A673 (cell line): ENCODE measurements at regions of chr1 and their contacts with region 1.

Region 1: DNA sequence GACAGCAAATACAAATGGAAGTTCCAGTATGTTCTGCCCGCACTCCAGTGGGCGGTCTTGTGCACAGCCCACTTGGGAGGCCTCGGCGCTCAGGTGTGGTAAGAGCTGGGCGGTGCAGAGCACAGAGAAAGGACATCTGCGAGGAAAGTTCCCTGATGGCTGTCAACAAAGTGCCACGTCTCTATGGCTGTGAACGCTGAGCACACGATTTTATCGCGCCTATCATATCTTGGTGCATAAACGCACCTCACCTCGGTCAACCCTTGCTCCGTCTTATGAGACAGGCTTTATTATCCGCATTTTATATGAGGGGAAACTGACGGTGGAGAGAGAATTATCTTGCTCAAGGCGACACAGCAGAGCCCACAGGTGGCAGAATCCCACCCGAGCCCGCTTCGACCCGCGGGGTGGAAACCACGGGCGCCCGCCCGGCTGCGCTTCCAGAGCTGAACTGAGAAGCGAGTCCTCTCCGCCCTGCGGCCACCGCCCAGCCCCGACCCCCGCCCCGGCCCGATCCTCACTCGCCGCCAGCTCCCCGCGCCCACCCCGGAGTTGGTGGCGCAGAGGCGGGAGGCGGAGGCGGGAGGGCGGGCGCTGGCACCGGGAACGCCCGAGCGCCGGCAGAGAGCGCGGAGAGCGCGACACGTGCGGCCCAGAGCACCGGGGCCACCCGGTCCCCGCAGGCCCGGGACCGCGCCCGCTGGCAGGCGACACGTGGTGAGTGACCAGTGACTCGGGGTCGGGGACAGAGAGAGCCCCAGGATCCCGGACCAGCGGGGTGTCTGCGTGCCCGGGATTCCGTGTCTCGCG is at the start of gene IL12RB2:
- DNase-seq: peak; percentile 7
- H3K4me3 ChIP-seq: peak within 1 kb of the TSS; percentile 33
- H3K27ac ChIP-seq: no peak within 1 kb of the TSS
- H3K4me1 ChIP-seq: peaks cover 4% of the 10 kb centered on the region
- H3K27me3 ChIP-seq: peaks cover 3% of the 10 kb centered on the region
- CTCF ChIP-seq: no peak
- total RNA-seq, gene IL12RB2: 0.39 and 0.70 TPM in 2 replicates

Region 2: DNA sequence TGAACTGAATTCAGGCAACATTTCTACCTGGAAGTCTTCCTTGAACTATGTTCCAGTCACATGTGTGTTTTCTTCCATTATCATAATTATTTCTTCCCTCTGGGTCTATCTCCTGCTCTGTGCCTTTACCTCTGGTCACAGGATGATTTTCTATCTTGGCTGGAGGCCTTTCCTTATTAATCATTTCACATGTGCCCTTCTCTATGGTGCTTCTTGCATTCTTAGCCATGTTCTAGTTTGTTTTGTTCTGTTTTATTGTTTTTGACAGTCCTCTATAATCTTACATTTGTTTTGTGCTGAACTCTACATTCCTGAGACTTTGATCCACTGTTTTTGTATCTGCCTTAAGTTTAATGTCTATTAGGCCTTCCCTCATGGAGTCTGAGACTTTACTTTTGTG is 722.5 kb before region 1 on chr1:
- CTCF ChIA-PET with region 1: no interaction called
- POLR2A ChIA-PET with region 1: interaction called, 10 read pairs
- intact Hi-C with region 1: no loop called
- DNase-seq: no peak
- H3K4me3 ChIP-seq: no peak overlapping the region
- H3K27ac ChIP-seq: no peak overlapping the region
- H3K4me1 ChIP-seq: no peaks in the 10 kb centered on the region
- H3K27me3 ChIP-seq: no peaks in the 10 kb centered on the region
- CTCF ChIP-seq: no peak